Left ventricle myocardium inferior (tissue), 1 donor: ENCODE measurements at regions of chrX and their contacts with region 1.

Region 1: GRCh38 chrX:133335027-133335426 is 80.3 kb downstream of the GPC4 start:
- DNase-seq: no peak
- H3K4me3 ChIP-seq: no peak overlapping the region
- H3K27ac ChIP-seq: no peak overlapping the region
- H3K4me1 ChIP-seq: no peaks in the 10 kb centered on the region
- H3K27me3 ChIP-seq: no peaks in the 10 kb centered on the region
- CTCF ChIP-seq: peak; percentile 52

Region 2: GRCh38 chrX:133670383-133670782 is 335.4 kb after region 1 on chrX:
- intact Hi-C with region 1: loop called (anchors 10 kb)
- DNase-seq: no peak
- H3K4me3 ChIP-seq: no peak overlapping the region
- H3K27ac ChIP-seq: no peak overlapping the region
- H3K4me1 ChIP-seq: no peaks in the 10 kb centered on the region
- H3K27me3 ChIP-seq: no peaks in the 10 kb centered on the region
- CTCF ChIP-seq: peak; percentile 73

Region 3: DNA sequence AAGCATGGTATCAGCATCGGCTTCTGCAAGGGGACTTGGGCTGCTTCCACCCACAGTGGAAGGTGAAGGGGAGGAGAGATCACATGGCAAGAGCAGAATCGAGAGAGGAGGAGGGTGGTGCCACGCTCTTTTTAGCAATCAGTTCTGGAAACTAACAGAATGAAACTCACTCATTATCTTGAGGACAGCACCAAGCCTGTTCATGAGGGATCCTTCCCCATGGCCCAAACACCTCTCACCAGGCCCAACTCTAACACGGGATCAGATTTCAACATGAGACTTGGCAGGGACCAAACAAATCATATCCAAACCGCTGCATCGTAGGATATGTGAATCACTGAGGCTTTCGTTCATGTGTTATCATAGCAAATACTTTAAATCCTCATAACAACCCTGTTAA is 524.8 kb after region 1 on chrX:
- intact Hi-C with region 1: no loop called
- DNase-seq: no peak
- H3K4me3 ChIP-seq: no peak overlapping the region
- H3K27ac ChIP-seq: no peak overlapping the region
- H3K4me1 ChIP-seq: no peaks in the 10 kb centered on the region
- H3K27me3 ChIP-seq: no peaks in the 10 kb centered on the region
- CTCF ChIP-seq: no peak